ENCODE measurements at regions of chr4 and their contacts with region 1.

Region 1: GRCh38 chr4:167629272-167629671 is 395.0 kb upstream of the SPOCK3 start:
- DNase-seq: no peak

Region 2: GRCh38 chr4:165799384-165799815 is 1829.9 kb before region 1 on chr4:
- intact Hi-C with region 1: loop called in 1 of 2 experiments (anchors 5 kb)
- DNase-seq: peak; percentile 76

Region 3: GRCh38 chr4:169133932-169134331 is 1504.7 kb after region 1 on chr4:
- intact Hi-C with region 1: no loop called
- DNase-seq: no peak